ENCODE measurements at regions of chr5 and their contacts with region 1.

Region 1: GRCh38 chr5:41924872-41925554 is at the start of gene FBXO4:
- DNase-seq: peak; percentile 69
- H3K4me3 Mint-ChIP-seq: peak within 1 kb of the TSS; percentile 68
- H3K27ac Mint-ChIP-seq: peak within 1 kb of the TSS; percentile 86
- H3K4me1 Mint-ChIP-seq: no peaks in the 10 kb centered on the region
- H3K27me3 Mint-ChIP-seq: no peaks in the 10 kb centered on the region
- CTCF ChIP-seq: peak; percentile 23
- total RNA-seq, gene FBXO4: 18.4 and 20.2 TPM in 2 replicates

Region 2: DNA sequence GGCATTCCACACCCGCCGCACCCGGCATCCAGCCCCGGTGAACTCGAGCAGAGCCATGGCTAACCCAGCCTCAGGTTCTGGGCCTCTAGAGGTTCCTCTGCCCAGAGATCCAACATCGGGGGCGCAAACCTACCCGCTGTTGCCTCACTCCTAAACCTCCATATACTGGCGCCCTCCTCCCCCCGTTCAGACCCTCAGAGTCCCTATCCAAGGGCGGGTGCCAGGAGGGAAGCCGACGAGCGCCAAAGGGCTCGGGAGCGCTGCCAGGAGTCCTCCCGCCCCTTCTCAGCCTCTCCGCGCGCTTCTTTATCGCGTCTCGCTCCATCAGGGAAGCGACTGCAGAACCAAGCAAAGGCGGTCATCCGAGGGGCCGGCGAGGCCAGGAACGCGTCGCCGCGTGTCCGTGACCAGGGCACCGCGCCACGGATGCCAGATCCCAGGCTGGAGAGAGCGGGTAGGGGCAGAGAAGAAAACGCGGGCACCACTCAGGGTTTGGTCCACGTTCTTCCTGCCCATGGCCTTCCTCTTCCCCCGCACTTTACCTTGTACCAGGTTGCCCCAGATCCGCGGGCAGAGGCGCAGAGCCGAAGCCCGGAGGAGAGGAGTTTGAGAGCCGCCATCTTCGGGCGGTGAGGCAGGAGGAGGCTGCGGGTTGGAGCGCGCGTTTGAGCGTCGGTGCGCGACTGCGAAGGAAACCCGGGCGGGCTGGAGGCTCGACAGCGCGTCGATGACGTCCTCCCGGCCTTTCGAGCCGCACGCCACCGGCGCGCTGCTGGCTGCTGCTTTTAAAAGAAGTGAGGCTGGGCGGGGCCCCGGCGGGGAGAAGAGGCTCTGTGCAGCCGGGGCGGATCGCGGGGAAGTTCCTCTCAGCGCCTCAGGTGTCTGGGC is 55.0 kb before region 1 on chr5 and contains the start of gene OXCT1:
- CTCF ChIA-PET with region 1: interaction called, 4 read pairs
- POLR2A ChIA-PET with region 1: interaction called, 12 read pairs
- intact Hi-C with region 1: no loop called
- DNase-seq: peak; percentile 87
- H3K4me3 Mint-ChIP-seq: peak within 1 kb of the TSS; percentile 89
- H3K27ac Mint-ChIP-seq: peak within 1 kb of the TSS; percentile 86
- H3K4me1 Mint-ChIP-seq: peaks cover 24% of the 10 kb centered on the region
- H3K27me3 Mint-ChIP-seq: no peaks in the 10 kb centered on the region
- CTCF ChIP-seq: no peak
- total RNA-seq, gene OXCT1: 47.1 and 48.6 TPM in 2 replicates